ENCODE measurements at regions of chr15 and their contacts with region 1.

Region 1: DNA sequence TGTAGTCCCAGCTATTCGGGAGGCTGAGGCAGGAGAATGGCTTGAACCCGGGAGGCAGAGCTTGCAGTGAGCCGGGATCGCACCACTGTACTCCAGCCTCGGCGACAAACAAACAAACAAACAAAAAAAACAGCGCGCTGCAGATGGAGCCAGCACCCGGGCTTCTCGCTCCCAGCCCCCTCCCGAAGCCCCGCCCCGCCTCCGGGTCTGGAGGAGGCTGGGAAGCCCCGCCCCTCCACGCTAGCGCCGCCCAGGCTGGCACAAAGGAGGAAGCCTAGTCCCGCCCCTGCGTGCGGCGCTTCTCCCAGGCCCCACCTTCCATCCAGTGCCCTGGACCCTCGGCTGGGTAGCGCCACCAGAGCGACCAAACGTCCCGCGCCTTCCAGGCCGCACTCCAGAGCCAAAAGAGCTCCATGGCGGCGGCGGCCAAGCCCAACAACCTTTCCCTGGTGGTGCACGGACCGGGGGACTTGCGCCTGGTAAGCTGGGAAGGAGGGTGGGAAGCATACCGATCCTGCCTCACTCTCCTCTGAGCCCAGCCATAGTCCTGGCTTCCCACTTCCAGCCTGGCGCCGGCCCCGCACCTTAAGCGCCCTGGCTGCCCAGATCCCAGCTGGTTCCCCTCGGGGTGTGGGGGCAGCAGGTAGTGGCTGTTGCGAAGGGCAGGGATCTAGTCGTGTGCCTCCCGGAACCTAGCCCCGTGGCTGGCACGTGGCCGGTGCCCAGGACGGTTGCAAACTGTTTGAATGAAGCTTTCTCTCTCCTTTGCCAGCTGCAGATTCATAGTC is at the start of gene SORD:
- DNase-seq: peak; percentile 93
- H3K4me3 ChIP-seq: peak within 1 kb of the TSS; percentile 89
- H3K27ac ChIP-seq: peak within 1 kb of the TSS; percentile 26
- H3K4me1 ChIP-seq: peaks cover 10% of the 10 kb centered on the region; the same call in 1 of the 2 replicates
- H3K27me3 ChIP-seq: 0 out of 2 replicates have a peak, but pooled peaks cover 9% of the 10 kb centered on the region
- total RNA-seq, gene SORD: 12.9 and 14.2 TPM in 2 replicates

Region 2: DNA sequence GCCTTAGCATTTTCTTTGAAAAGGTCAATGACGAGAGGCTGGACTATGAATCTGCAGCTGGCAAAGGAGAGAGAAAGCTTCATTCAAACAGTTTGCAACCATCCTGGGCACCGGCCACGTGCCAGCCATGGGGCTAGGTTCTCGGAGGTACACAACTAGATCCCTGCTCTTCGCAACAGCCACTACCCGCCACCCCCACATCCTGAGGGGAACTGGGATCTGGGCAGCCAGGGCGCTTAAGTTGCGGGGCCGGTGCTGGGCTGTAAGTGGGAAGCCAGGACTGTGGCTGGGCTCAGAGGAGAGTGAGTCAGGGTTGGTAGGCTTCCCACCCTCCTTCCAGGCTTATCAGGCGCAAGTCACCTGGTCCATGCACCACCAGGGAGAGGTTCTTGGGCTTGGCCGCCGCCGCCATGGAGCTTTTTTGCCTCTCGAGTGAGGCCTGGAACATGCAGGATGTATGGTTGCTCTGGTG is 161.6 kb before region 1 on chr15:
- in situ Hi-C with region 1: loop called (anchors 10 kb)
- DNase-seq: no peak
- H3K4me3 ChIP-seq: no peak overlapping the region
- H3K27ac ChIP-seq: no peak overlapping the region
- H3K4me1 ChIP-seq: no peaks in the 10 kb centered on the region
- H3K27me3 ChIP-seq: no peaks in the 10 kb centered on the region

Region 3: GRCh38 chr15:44918136-44918535 is 104.9 kb before region 1 on chr15:
- in situ Hi-C with region 1: no loop called
- DNase-seq: no peak
- H3K4me3 ChIP-seq: no peak overlapping the region
- H3K27ac ChIP-seq: no peak overlapping the region
- H3K4me1 ChIP-seq: no peaks in the 10 kb centered on the region
- H3K27me3 ChIP-seq: no peaks in the 10 kb centered on the region

Region 4: GRCh38 chr15:45083223-45083622 is 60.2 kb after region 1 on chr15:
- in situ Hi-C with region 1: no loop called
- DNase-seq: no peak
- H3K4me3 ChIP-seq: no peak overlapping the region
- H3K27ac ChIP-seq: no peak overlapping the region
- H3K4me1 ChIP-seq: no peaks in the 10 kb centered on the region
- H3K27me3 ChIP-seq: peaks cover 25% of the 10 kb centered on the region; the same call in 1 of the 2 replicates

Region 5: DNA sequence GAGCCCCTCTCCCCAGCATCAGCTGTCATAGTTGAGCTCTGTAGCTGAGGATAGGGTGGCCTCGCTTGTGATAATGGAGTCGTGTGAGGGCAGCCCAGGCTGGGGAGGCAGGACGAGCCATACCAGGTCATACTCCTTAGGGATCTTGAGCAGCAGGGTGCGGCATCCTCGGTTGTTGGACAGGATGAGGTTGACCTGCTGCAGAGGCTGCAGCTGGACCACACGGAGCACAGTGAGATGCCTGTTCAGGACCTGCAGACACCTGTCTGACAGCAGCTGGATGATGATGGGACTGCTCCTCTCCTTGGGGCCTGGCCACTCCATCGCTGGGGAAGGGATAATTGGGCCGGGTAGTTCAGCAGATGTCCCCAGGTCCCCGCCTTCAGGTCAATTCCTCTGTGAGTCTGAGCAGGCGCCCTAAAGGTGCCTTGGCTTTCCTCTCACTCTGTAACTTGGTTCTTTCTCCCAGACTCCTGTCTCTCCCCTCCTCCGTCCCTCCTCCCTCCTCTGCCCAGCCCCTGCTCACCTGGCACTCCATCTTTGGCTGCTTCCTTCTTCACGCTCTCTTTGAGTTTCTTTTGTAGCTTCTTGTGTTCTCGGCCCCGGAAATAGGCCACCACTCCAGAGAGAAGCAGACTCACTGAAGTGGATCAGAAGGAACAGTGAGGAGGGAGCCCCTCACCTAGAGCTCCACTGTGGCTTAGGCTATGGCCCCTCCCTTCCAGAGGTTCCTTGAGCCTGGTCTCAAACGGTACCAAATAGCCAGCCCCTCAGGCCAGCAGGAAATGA is 83.1 kb after region 1 on chr15:
- in situ Hi-C with region 1: no loop called
- DNase-seq: no peak
- H3K4me3 ChIP-seq: no peak overlapping the region
- H3K27ac ChIP-seq: no peak overlapping the region
- H3K4me1 ChIP-seq: no peaks in the 10 kb centered on the region
- H3K27me3 ChIP-seq: peaks cover 14% of the 10 kb centered on the region; the same call in 1 of the 2 replicates

Measured in GM23248 (cell line).